Transverse colon (tissue), 4 donors: ENCODE measurements at regions of chr9 and their contacts with region 1.

Region 1: DNA sequence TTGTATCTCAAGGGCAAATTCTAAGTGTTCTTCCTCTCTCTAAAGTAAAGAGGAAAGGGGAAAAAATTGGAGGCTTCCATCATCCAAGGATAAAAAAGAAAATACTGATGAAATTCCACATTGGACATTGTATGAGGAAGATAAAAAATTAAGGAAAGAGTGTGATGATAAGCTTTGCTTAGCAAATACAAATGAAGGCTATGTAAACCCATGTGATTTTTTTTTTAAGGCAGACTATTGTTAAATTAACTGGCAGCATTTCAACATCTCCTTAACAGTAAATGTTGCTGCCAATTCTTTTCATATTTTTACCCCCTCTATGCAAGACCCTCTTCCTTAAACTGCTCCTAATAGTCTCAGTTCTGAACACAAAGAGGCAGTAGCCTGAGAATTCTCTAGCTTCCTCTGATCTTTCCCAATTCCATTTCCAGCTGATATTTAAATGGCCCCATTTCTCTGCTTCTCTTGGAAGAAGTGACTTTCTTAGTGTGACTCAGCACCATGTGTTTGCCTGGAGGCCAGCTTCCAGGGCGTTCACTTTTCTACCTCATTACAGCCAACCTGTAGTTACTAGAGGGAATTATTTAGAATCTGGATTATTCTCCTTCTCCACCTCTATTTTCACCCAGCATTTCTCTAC is 159.7 kb downstream of the TLE1 start:
- DNase-seq: no peak
- H3K4me3 ChIP-seq: no peak overlapping the region
- H3K27ac ChIP-seq: peak overlapping the region in 1 of 4 donors; percentile 22
- H3K4me1 ChIP-seq: peaks cover 0 to 12% (median 0%) of the 10 kb centered on the region in 4 donors
- H3K27me3 ChIP-seq: no peaks in the 10 kb centered on the region
- CTCF ChIP-seq: no peak
- EP300 ChIP-seq: no peak
- POLR2A ChIP-seq: no peak

Region 2: GRCh38 chr9:81671880-81672280 is 142.2 kb after region 1 on chr9:
- in situ Hi-C with region 1: loop called in 1 of 4 experiments (anchors 10 kb)
- intact Hi-C with region 1: no loop called
- DNase-seq: peak; percentile 77
- H3K4me3 ChIP-seq: no peak overlapping the region
- H3K27ac ChIP-seq: peak overlapping the region; percentile 14 to 62 (median 56)
- H3K4me1 ChIP-seq: peaks cover 0 to 54% (median 9%) of the 10 kb centered on the region in 4 donors
- H3K27me3 ChIP-seq: no peaks in the 10 kb centered on the region
- CTCF ChIP-seq: no peak
- EP300 ChIP-seq: no peak
- POLR2A ChIP-seq: no peak

Region 3: DNA sequence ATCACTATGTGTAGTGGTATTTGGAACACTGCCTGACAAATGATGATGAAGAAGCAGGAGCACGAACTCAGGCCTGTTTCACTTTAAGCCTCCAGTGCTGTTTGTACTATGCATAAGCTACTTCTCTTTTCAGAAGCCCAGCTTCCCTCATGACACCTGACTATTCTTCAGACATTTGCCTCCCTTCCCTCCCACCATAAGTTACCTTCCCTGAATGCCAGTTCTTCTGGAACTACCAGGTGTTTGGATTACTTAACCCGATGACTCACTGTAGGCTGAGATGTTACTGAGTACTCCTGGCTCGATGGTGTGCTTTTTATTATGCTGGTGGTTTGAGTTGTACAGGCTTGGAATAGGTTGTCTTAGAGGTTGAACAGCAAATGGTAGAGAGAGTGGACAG is 638.9 kb after region 1 on chr9:
- in situ Hi-C with region 1: no loop called
- intact Hi-C with region 1: no loop called
- DNase-seq: no peak
- H3K4me3 ChIP-seq: no peak overlapping the region
- H3K27ac ChIP-seq: no peak overlapping the region
- H3K4me1 ChIP-seq: no peaks in the 10 kb centered on the region
- H3K27me3 ChIP-seq: no peaks in the 10 kb centered on the region
- CTCF ChIP-seq: no peak
- EP300 ChIP-seq: no peak
- POLR2A ChIP-seq: no peak